ENCODE measurements at regions of chr9 and their contacts with region 1.

Region 1: GRCh38 chr9:14309403-14309802 is 4.5 kb downstream of the NFIB start:
- DNase-seq: no peak
- ATAC-seq: peak; percentile 8

Region 2: DNA sequence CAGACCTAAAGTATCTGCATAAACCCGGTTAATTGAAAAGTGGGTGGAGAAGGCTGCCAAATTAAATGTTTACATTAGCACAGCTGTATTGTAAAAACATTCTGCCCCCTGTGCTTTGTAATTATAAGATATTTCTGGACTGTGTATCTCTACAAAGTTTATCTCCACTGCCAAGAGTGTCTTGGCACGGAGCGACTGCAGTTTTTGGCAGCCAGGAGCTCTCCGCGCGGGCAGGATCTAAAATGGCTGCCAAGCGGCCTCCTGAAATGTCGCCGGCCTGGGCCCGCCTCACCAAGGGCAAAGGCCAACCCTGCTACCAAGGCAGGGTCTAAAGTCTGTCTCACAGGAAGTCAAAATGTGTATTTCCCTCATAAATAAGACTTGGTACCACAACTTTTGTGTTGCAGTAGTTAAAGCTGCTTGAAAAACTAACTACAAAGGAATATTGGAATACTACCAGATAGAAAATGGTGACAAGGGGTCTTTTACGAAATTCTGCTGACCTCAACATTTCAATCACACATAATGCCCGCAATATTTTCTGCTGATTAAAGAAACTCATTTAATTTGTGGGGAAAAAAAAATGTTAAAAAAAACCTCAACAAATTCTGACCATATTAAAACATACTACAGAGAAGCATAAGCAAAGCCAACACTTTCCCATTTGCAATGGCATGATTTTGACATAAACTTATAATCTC is 105.9 kb before region 1 on chr9:
- intact Hi-C with region 1: loop called in 1 of 2 experiments (anchors 10 kb)
- DNase-seq: peak; percentile 74 to 80
- ATAC-seq: peak; percentile 95